ENCODE measurements at regions of chr11 and their contacts with region 1.

Region 1: GRCh38 chr11:128630367-128631230 is 43.2 kb upstream of the ETS1 start:
- DNase-seq: peak; percentile 90
- H3K4me3 ChIP-seq: no peak overlapping the region
- H3K27ac ChIP-seq: no peak overlapping the region
- H3K4me1 ChIP-seq: no peaks in the 10 kb centered on the region
- H3K27me3 ChIP-seq: no peaks in the 10 kb centered on the region
- CTCF ChIP-seq: peak; percentile 86 to 96 (median 90)
- POLR2A ChIP-seq: no peak

Region 2: DNA sequence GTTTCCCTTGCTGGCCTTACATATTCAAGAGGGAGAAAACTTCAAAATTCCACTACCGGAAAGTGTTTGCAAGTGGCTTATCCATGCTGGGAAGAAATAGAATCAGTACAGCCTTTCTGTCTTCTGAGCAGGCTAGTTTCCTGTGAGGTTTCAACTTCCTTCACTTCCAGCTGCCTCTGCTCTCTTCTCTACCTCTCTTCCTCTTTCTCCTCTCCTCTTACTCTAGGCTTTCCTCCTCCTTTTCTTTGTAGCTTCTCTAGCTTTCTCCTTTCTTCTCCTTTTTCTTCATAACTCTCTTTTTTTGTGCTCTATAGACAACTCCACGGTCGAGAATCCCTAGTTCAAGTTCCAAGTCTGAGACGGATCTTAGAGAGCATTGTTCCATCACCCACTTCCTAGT is 465.0 kb before region 1 on chr11:
- intact Hi-C with region 1: loop called (anchors 5 kb)
- DNase-seq: no peak
- H3K4me3 ChIP-seq: no peak overlapping the region
- H3K27ac ChIP-seq: no peak overlapping the region
- H3K4me1 ChIP-seq: no peaks in the 10 kb centered on the region
- H3K27me3 ChIP-seq: no peaks in the 10 kb centered on the region
- CTCF ChIP-seq: no peak
- POLR2A ChIP-seq: no peak

Region 3: GRCh38 chr11:128290106-128290840 is 340.3 kb before region 1 on chr11:
- intact Hi-C with region 1: loop called (anchors 5 kb)
- DNase-seq: peak; percentile 77
- H3K4me3 ChIP-seq: no peak overlapping the region
- H3K27ac ChIP-seq: no peak overlapping the region
- H3K4me1 ChIP-seq: no peaks in the 10 kb centered on the region
- H3K27me3 ChIP-seq: no peaks in the 10 kb centered on the region
- CTCF ChIP-seq: peak; percentile 86 to 87 (median 87)
- POLR2A ChIP-seq: no peak

Measured in testis (tissue), 5 donors.